ENCODE measurements at regions of chr7 and their contacts with region 1.

Region 1: GRCh38 chr7:28239823-28240204 is 59.2 kb upstream of the JAZF1 start:
- DNase-seq: no peak
- H3K4me3 Mint-ChIP-seq: peak overlapping the region; percentile 15
- H3K27ac Mint-ChIP-seq: peak overlapping the region; percentile 79
- H3K4me1 Mint-ChIP-seq: peaks cover 11% of the 10 kb centered on the region
- H3K27me3 Mint-ChIP-seq: peaks cover 48% of the 10 kb centered on the region

Region 2: GRCh38 chr7:28179120-28180030 is 60.4 kb before region 1 on chr7:
- intact Hi-C with region 1: loop called (anchors 2 kb)
- DNase-seq: peak; percentile 57
- H3K4me3 Mint-ChIP-seq: peak overlapping the region; percentile 82
- H3K27ac Mint-ChIP-seq: peak overlapping the region; percentile 62
- H3K4me1 Mint-ChIP-seq: peaks cover 23% of the 10 kb centered on the region
- H3K27me3 Mint-ChIP-seq: peaks cover 31% of the 10 kb centered on the region

Region 3: GRCh38 chr7:28207486-28208158 is 32.2 kb before region 1 on chr7:
- intact Hi-C with region 1: loop called (anchors 1 kb)
- DNase-seq: no peak
- H3K4me3 Mint-ChIP-seq: peak overlapping the region; percentile 2
- H3K27ac Mint-ChIP-seq: peak overlapping the region; percentile 7
- H3K4me1 Mint-ChIP-seq: peaks cover 38% of the 10 kb centered on the region
- H3K27me3 Mint-ChIP-seq: peaks cover 8% of the 10 kb centered on the region

Region 4: DNA sequence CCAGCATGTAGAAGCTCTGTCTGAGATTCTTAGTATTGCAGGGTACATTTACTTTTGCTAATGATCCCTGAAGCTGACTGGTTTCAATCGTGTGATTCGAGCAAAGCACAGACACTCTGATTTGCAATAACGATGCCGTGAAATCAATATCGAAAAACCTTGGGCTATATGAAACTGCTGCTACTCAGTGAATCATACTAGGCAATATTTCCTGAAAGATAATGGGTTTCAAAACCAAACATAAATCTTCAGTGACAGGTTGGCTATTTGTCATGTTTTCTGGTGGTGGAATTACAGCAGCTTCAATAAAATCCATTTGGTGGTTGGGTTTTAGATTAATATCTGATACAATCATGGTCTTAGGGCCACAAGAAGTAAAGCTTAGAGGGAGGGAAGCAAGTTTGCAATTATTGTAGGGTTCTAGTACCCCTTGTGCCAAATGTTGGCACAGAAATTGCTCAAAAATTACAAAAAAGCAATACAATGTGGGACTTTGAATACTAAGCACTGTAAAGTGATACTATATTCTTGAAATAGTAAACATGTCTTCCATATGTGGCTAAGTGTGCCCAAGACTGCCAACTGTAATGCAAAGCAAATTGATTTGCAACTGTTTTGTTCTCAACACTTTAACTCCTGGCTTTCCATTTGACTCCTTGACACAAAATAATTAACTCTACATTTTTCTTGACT is 53.2 kb after region 1 on chr7:
- intact Hi-C with region 1: loop called (anchors 1 kb)
- DNase-seq: no peak
- H3K4me3 Mint-ChIP-seq: no peak overlapping the region
- H3K27ac Mint-ChIP-seq: no peak overlapping the region
- H3K4me1 Mint-ChIP-seq: peaks cover 8% of the 10 kb centered on the region
- H3K27me3 Mint-ChIP-seq: peaks cover 28% of the 10 kb centered on the region

Region 5: DNA sequence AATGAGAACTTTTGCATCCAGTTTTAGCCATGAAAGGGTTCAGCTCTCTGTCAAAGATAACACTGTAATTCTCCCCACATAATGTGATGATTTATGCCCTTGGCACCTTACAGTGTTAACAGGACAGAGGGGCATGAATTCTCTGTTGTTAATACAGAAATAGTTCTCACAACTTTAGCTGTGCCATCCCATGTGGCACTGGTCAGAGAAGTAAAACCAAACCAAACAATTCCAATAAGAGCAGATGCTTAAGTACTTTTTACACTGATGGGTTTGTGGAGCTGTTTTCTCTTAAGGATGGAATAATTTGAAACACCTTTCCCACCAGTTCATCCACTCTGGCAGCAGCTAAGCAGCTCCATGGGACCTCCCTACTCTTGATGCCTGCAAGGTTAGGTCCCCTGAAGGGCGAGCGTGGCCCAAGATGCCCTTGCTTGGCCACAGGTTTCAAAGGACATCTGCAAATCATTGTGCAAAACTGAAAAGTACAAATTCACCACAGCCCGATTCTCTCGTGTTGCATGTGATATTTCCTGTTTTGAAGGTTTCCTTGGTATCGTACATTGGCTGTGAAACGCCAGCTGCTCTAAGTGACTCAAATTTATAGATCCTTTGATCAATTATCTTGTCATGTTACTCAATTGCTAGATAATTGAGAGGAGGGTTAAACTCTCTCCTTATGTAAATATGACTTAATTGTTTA is 90.0 kb after region 1 on chr7:
- intact Hi-C with region 1: loop called (anchors 1 kb)
- DNase-seq: peak; percentile 6
- H3K4me3 Mint-ChIP-seq: peak overlapping the region; percentile 48
- H3K27ac Mint-ChIP-seq: no peak overlapping the region
- H3K4me1 Mint-ChIP-seq: peaks cover 28% of the 10 kb centered on the region
- H3K27me3 Mint-ChIP-seq: no peaks in the 10 kb centered on the region

Region 6: DNA sequence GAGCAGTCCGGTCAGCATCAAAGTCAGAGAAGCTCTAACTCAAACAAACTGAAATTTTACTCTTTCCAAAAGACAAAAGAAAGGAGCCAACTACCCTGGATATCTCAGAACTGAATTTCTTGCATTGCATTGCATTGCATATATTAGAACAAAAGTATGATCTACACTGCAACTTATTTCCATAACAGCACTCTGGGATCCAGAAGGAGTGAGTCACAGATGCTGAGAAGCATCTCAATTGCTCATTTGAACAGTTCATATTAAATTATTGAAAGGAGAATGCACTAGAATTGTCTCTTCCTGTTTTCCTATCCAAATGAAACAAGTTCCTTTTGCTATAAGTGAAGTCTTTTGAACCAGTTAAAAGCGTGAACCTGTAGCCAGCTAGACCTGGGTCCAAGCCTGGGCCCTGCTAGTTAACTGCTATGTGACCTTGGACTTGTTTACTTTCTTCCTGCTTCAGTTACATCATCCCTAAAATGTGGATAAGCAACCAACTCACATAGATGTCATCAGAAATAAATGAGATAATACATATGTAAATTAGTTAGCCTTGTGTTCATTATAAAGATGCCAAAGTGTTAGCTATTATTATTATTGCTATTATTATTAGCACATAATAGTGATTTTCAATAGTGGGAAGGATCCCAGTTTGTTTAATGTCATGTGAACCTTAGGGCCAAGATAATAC is 356.6 kb after region 1 on chr7:
- intact Hi-C with region 1: no loop called
- DNase-seq: no peak
- H3K4me3 Mint-ChIP-seq: no peak overlapping the region
- H3K27ac Mint-ChIP-seq: no peak overlapping the region
- H3K4me1 Mint-ChIP-seq: no peaks in the 10 kb centered on the region
- H3K27me3 Mint-ChIP-seq: peaks cover 3% of the 10 kb centered on the region